ENCODE measurements at regions of chr16 and their contacts with region 1.

Region 1: DNA sequence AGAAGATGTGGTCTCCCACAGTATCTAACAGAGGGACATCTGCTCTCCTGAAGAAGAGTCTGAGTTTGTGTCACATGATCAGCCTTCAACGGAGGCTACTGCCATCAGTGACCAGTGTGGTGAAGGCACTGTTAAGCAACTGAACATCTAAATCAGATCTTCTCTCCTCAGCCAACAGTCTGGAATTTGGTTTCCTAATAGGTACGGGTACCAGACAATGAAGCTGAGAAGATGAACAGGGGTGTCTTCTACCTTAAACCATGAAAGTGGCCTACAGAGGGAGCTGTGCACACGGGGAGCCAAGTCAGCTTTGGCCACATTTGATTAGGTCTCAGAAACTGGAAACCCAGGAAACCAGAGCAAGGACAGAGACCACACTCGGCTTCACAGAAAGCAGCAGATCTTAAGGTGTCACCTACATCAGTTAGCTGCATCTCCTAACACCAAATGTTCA is 41.8 kb downstream of the BRD7 start:
- DNase-seq: no peak
- ATAC-seq: no peak
- H3K4me3 ChIP-seq: no peak overlapping the region
- H3K27ac ChIP-seq: peak overlapping the region in 1 of 2 donors; percentile 33
- H3K4me1 ChIP-seq: peaks cover 0 to 5% of the 10 kb centered on the region in 2 donors
- H3K27me3 ChIP-seq: no peaks in the 10 kb centered on the region

Region 2: GRCh38 chr16:50354629-50355456 is 27.9 kb after region 1 on chr16:
- intact Hi-C with region 1: loop called (anchors 2 to 5 kb)
- DNase-seq: no peak
- ATAC-seq: no peak
- H3K4me3 ChIP-seq: no peak overlapping the region
- H3K27ac ChIP-seq: no peak overlapping the region
- H3K4me1 ChIP-seq: no peaks in the 10 kb centered on the region
- H3K27me3 ChIP-seq: no peaks in the 10 kb centered on the region

Region 3: DNA sequence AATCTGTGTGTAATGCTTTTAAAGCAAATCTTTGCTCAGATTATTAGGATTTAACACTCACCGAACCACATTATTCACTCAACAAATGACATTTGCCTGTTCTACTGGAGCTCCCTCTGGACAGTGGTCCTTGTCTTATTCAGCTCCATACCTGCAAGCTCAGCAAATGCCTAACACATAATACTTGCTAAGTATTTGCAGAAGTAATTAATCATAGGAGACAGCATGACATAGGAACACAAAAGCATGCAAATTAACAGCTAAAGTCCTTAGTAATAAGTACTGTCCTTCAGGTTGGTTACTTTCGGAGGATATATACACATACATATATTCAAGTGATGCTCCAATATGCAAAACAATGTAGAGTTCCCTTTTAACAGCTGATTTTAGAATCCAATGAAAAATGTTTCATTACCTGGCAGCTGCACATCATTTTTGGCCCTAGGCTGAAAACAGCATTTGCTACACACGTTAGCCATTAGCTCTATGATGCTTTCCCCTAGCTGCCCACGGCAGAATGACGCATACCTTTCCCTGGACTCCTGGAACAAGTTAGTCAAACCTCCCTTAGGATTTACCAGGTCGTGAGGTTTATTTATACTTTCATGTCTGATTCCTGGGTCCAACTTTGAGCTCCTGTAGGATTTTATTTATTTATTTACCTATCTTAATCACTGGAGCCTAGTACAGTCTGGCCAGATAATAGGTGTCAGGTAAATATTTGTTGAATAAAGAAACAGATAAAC is 33.2 kb after region 1 on chr16:
- intact Hi-C with region 1: loop called (anchors 2 to 5 kb)
- DNase-seq: peak; percentile 72 to 86
- ATAC-seq: peak; percentile 57
- H3K4me3 ChIP-seq: no peak overlapping the region
- H3K27ac ChIP-seq: peak overlapping the region; percentile 93 to 99
- H3K4me1 ChIP-seq: peaks cover 5 to 9% of the 10 kb centered on the region in 2 donors
- H3K27me3 ChIP-seq: no peaks in the 10 kb centered on the region